ENCODE measurements at regions of chr6 and their contacts with region 1.

Region 1: DNA sequence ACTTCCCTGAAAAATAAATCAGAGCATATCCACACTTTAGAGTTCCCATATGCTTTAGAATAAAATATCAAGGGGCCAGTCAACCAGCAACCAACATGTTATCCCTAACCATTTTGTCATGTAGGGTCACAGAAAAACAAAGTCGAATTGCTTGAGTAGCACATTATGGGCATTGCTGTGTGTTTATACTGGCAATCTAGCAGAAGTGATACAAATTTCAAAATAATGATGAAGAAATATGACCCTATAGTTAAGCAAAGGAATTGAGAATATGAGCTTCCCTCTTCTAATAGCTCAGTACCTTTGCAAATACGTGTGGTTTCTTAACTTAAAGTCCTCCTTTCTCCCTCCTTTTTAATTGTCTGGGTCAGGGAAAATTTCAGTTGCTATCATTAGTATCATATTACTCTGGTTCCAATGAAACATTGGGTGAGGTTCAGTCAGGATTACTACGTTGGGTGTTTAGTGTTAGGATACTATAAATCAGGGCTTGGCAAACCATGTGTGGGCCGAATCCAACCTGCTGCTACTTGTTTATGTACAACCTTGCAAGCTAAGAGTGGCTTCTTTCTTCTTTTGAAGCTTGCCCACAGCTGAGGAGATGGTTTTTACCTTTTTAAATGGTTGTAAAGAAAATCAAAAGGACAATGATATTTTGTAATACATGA is 166.8 kb upstream of the CARMIL1 start:
- DNase-seq: no peak
- ATAC-seq: no peak
- H3K4me3 ChIP-seq: no peak overlapping the region
- H3K27ac ChIP-seq: peak overlapping the region in 1 of 12 donors; percentile 5
- H3K4me1 ChIP-seq: peaks cover 0 to 20% (median 0%) of the 10 kb centered on the region in 12 donors
- H3K27me3 ChIP-seq: no peaks in the 10 kb centered on the region
- CTCF ChIP-seq: no peak
- POLR2A ChIP-seq: no peak

Region 2: GRCh38 chr6:25094726-25095125 is 17.6 kb before region 1 on chr6:
- intact Hi-C with region 1: loop called in 1 of 10 experiments (anchors 2 kb)
- DNase-seq: no peak
- ATAC-seq: no peak
- H3K4me3 ChIP-seq: no peak overlapping the region
- H3K27ac ChIP-seq: no peak overlapping the region
- H3K4me1 ChIP-seq: peaks cover 0 to 8% (median 0%) of the 10 kb centered on the region in 12 donors
- H3K27me3 ChIP-seq: no peaks in the 10 kb centered on the region
- CTCF ChIP-seq: no peak
- POLR2A ChIP-seq: no peak

Region 3: DNA sequence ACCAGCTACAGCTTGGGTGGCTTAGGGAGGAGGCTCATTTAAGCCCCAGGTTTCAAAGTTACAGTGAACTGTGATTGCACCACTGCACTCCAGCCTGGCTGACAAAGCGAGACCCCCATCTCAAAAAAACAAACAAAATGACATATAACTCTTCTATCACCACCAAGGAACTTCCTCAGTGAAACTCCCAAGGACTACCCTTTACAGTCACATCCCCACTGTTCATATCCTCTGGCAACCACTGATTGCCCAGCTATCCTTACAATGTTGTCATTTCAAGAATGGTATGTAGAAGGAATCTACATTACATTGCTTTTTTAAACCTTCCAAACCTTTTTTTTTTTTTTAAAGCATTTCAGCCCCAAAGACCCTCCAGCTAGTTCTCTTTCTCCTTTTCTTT is 43.8 kb after region 1 on chr6:
- intact Hi-C with region 1: no loop called
- DNase-seq: no peak
- ATAC-seq: no peak
- H3K4me3 ChIP-seq: no peak overlapping the region
- H3K27ac ChIP-seq: no peak overlapping the region
- H3K4me1 ChIP-seq: peaks cover 0 to 8% (median 0%) of the 10 kb centered on the region in 12 donors
- H3K27me3 ChIP-seq: no peaks in the 10 kb centered on the region
- CTCF ChIP-seq: no peak
- POLR2A ChIP-seq: no peak

Measured in heart left ventricle (tissue), 16 donors.